ENCODE measurements at regions of chr20 and their contacts with region 1.

Region 1: GRCh38 chr20:62025832-62026563 is 39.7 kb downstream of the TAF4 start:
- DNase-seq: peak; percentile 12
- H3K4me3 ChIP-seq: no peak overlapping the region
- H3K27me3 ChIP-seq: no peaks in the 10 kb centered on the region
- CTCF ChIP-seq: peak; percentile 90

Region 2: GRCh38 chr20:61912665-61913422 is 113.2 kb before region 1 on chr20:
- CTCF ChIA-PET with region 1: no interaction called
- POLR2A ChIA-PET with region 1: no interaction called
- DNase-seq: no peak
- H3K4me3 ChIP-seq: no peak overlapping the region
- H3K27me3 ChIP-seq: no peaks in the 10 kb centered on the region; the same call in 1 of the 2 replicates
- CTCF ChIP-seq: no peak

Region 3: DNA sequence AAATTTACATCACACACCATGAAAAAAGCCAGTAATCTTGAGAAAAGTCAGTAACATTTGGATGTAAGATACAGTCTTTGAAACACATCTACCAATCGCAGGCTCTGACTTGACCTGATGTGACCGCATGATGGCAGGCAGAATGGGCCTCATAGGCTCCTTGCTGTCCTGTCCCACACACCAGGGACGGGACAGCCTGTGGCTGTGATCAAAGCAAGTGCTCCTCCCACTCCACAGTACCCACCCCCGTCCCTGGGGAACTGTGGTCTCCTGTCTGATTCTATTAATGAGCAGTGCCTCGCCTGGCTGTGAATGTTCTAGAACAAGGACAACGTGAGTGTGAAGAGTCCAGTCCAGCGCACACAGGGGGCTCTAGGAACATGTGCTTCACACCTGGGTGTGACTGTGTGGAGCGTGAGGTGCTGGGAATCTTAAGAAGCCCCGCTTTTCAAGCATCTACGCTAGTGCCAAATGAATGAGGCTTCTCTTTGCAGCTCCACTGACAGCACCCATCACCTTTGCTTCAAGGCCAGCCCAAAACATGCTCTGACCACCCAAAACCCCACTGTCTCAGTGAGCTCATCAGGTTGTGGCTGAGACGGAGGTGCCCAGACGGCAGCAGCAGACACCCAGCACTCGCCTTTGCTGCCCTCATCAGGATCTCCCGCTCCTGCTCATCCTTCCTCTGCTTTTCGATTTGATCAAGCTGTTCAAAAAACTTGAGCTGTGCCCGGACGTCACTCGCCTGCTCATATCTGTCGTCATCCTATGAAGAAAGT is 27.5 kb before region 1 on chr20:
- CTCF ChIA-PET with region 1: no interaction called
- POLR2A ChIA-PET with region 1: no interaction called
- DNase-seq: no peak
- H3K4me3 ChIP-seq: no peak overlapping the region
- H3K27me3 ChIP-seq: no peaks in the 10 kb centered on the region
- CTCF ChIP-seq: no peak

Region 4: DNA sequence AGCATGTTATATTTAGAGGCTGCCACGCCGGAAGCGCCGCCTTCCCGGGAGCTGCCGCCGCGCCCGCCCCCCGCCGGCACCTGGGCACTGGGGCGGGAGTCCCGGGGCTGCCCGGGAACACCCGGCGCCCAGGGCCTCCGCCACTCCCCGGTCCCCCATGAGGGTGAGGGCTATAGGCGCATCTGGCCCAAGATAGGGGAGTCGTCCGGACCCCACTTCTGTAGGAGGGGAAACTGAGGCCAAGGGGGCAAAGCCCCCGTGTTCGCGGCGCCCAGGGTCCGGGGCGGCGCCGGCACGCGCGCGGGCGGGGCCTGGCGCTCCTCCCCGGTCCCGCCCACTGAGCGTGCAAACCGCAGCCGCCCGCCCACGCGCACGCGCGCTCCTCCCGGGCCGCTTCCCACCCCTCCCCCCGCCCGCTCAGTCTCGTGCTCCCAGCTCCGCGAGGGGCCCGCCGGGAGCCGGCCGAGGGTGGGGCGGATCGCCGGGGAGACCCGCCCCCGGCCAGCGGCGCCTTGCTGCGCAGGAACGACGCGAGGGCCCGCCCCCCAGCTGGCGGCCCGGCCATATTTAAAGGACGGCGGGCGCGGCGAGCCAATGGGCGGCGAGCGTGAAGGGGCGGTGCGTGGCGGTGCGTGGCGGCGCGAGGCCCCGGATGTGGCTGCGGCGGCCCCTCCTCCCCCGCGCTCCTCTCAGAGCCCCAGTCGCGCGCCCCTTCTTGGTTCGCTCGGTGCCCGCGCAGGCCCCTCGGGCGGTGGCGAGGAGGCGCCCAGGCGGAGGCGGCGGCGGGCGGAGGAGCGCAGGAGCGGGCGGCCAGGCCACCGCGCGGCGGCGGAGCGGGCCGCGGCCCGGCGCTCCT is 96.0 kb after region 1 on chr20 and contains the start of gene LSM14B:
- CTCF ChIA-PET with region 1: interaction called, 11 read pairs
- POLR2A ChIA-PET with region 1: no interaction called
- DNase-seq: peak; percentile 82
- H3K4me3 ChIP-seq: peak within 1 kb of the TSS; percentile 73
- H3K27me3 ChIP-seq: peaks cover 11% of the 10 kb centered on the region
- CTCF ChIP-seq: no peak
- polyA plus RNA-seq, gene LSM14B: 23.5 and 48.2 TPM in 2 replicates

Region 5: DNA sequence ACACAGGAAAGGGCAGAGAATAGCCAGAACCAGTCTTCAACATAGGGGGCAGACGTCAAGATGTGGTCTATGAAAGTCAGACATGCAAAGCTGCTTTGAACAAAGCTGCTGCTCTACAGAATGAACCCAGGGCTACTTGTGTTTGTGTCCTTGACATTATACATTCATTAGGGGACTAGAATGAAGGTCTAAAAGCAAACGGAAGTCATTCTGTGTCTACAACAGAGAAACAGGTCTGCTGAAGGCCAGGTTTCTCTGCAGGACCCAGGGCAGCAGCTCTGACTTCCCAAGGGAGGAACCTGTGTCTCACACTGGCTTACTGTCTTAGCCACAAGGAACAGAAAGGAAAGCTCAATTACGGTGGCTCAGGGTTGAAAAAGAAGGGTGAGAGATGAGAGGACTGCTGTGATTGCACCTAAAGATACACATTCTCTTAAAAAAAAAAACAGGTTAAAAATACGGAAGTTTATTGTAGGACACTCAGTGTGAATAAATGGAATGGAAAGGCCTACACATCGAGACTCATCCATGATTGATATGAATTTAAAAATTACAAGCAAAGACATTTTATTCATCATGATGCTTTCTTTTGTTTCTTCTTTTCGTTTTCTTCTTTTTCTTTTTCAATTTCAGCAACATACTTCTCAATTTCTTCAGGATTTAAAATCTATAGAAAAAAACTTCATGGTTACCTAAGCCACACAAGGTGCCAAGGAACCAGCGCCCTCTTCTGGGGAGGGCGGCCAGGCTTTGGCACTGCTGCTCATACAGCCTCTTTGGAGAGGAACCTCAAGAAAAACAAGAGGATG is 110.5 kb after region 1 on chr20:
- CTCF ChIA-PET with region 1: interaction called, 14 read pairs
- POLR2A ChIA-PET with region 1: no interaction called
- DNase-seq: no peak
- H3K4me3 ChIP-seq: no peak overlapping the region
- H3K27me3 ChIP-seq: no peaks in the 10 kb centered on the region
- CTCF ChIP-seq: peak; percentile 90

Region 6: DNA sequence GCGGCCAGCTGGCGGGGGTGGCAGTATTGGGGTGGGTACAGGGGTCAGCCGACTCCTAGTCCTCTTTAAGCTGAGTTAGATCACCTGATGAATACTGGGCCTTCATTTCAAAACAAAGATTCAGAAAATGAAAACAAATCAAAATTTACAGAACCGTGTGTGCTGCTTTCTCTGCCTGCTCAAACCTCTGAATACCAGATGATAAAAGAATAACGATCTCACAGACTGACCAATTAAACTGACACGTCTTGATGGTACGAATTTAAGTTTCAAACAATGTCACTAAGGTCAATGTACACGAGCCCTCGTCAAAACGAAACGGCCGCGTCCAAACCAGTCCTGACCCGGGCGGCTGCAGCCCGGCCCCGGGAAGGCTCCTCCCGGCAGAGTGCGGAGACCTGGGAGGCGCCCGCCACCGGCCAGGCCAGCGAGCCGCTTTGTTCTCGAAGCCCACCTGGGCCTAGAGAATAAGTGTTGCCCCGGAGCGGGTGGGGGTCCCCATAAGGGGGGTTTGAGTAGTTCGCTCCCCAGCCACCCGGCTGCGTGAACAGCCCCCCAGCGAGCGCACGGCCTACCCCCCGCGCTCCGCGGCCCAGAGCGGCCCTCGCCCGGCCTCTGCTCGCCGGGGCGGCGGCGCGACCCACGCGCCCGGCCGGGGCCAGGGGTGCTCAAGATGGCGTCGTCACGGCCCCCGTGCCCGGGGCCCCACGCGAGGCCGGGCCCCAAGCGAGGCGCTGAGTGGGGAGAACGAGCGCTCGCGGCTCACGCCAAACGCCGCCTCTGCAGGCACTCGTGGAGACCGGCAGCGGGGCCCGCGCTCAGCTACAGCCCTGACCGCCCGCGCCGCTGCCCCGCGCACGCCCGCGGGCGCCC is 116.5 kb after region 1 on chr20:
- CTCF ChIA-PET with region 1: interaction called, 12 read pairs
- POLR2A ChIA-PET with region 1: no interaction called
- DNase-seq: no peak
- H3K4me3 ChIP-seq: peak overlapping the region; percentile 69
- H3K27me3 ChIP-seq: no peaks in the 10 kb centered on the region
- CTCF ChIP-seq: no peak

Region 7: DNA sequence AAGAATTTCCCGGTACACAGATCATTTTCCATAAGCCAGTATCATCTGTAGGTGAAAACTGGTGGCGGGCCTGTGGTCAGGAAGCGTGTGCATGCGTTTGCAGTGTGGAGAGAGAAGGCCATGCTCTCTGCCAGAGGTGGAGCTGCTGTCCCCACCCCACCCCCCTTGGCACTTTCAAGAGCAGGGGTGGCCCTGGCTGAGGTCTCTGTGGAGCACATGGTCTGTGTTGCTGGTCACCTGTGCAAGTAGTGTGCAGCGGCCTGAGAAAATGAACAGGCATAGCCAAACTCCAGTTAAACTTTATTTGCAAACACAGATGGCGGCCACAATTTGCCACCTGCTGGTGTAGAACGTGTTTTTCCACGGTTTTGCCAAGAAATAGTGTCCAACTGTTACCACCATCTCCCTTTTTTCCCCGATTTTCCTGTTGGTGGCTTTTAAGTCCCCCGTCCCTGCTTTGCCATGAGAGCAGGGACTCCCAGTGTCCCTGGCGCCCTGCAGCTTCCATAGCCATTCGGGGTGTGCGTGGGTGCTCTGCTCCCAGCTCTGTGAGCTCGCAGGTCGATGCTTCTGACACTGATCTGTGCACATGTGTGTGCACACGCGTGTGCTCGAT is 279.3 kb after region 1 on chr20:
- CTCF ChIA-PET with region 1: no interaction called
- POLR2A ChIA-PET with region 1: no interaction called
- DNase-seq: no peak
- H3K4me3 ChIP-seq: no peak overlapping the region
- H3K27me3 ChIP-seq: no peaks in the 10 kb centered on the region
- CTCF ChIP-seq: no peak

Measured in BJ (cell line).